CD4-positive, alpha-beta T cell (primary cell): ENCODE measurements at regions of chr1 and their contacts with region 1.

Region 1: GRCh38 chr1:161045750-161046571 is at the start of gene USF1:
- DNase-seq: peak; percentile 86 to 97 (median 92)
- ATAC-seq: peak; percentile 82
- H3K4me3 ChIP-seq: peak within 1 kb of the TSS; percentile 98
- H3K4me3 Mint-ChIP-seq: peak within 1 kb of the TSS; percentile 93
- H3K27ac ChIP-seq: peak within 1 kb of the TSS; percentile 90 to 96
- H3K27ac Mint-ChIP-seq: peak within 1 kb of the TSS; percentile 94
- H3K4me1 ChIP-seq: peaks cover 52% of the 10 kb centered on the region
- H3K4me1 Mint-ChIP-seq: peaks cover 43% of the 10 kb centered on the region
- H3K27me3 ChIP-seq: no peaks in the 10 kb centered on the region
- H3K27me3 Mint-ChIP-seq: no peaks in the 10 kb centered on the region
- CTCF ChIP-seq: no peak
- total RNA-seq, gene USF1: 93.5 to 99.1 TPM

Region 2: DNA sequence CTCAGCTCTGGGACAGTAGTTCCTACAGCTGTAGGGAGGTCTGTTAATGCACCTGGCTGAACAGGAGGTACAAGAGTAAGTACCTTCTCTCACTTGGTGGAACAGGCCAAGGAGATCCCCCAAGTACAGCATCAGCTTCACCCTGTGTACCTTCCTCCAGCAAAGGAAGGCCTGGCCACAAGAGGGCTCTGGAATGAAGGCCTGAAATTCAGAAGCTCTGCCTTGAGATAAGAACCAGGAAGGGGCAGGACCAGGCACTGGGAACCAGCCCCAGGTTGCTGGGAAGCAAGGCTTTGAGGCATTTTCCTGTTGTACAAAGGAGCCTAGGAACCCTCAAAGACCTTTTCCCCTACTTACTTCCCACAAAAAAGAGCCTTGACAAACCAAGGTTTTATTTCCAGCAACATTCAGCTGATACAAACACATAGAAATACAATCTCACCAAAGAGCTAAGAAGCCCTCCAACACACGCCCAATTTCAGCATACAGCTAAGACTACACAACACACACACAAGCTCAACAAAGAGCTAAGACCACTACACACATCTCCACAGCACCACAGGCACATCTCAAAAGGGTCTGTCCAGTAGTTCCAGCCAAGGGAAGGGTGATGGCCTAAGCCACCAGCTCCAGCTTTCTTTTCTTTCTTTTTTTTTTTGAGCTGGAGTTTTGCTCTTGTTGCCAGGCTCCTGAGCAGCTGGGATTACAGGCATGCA is 48.5 kb before region 1 on chr1:
- CTCF ChIA-PET with region 1: interaction called, 11 read pairs
- POLR2A ChIA-PET with region 1: interaction called, 13 read pairs
- intact Hi-C with region 1: no loop called
- DNase-seq: peak in 13 of 14 experiments; percentile 23 to 75 (median 47)
- ATAC-seq: peak; percentile 78
- H3K4me3 ChIP-seq: no peak overlapping the region
- H3K4me3 Mint-ChIP-seq: no peak overlapping the region
- H3K27ac ChIP-seq: no peak overlapping the region
- H3K27ac Mint-ChIP-seq: no peak overlapping the region
- H3K4me1 ChIP-seq: peaks cover 5% of the 10 kb centered on the region
- H3K4me1 Mint-ChIP-seq: no peaks in the 10 kb centered on the region
- H3K27me3 ChIP-seq: no peaks in the 10 kb centered on the region
- H3K27me3 Mint-ChIP-seq: no peaks in the 10 kb centered on the region
- CTCF ChIP-seq: peak; percentile 56

Region 3: GRCh38 chr1:161021165-161021960 is 24.6 kb before region 1 on chr1:
- CTCF ChIA-PET with region 1: interaction called, 10 read pairs
- POLR2A ChIA-PET with region 1: interaction called, 43 read pairs
- intact Hi-C with region 1: loop called in 1 of 2 experiments (anchors 1 kb)
- DNase-seq: peak; percentile 79 to 96 (median 90)
- ATAC-seq: peak; percentile 95
- H3K4me3 ChIP-seq: peak overlapping the region; percentile 77
- H3K4me3 Mint-ChIP-seq: peak overlapping the region; percentile 91
- H3K27ac ChIP-seq: no peak overlapping the region
- H3K27ac Mint-ChIP-seq: peak overlapping the region; percentile 81
- H3K4me1 ChIP-seq: peaks cover 19% of the 10 kb centered on the region
- H3K4me1 Mint-ChIP-seq: peaks cover 25% of the 10 kb centered on the region
- H3K27me3 ChIP-seq: no peaks in the 10 kb centered on the region
- H3K27me3 Mint-ChIP-seq: no peaks in the 10 kb centered on the region
- CTCF ChIP-seq: no peak

Region 4: DNA sequence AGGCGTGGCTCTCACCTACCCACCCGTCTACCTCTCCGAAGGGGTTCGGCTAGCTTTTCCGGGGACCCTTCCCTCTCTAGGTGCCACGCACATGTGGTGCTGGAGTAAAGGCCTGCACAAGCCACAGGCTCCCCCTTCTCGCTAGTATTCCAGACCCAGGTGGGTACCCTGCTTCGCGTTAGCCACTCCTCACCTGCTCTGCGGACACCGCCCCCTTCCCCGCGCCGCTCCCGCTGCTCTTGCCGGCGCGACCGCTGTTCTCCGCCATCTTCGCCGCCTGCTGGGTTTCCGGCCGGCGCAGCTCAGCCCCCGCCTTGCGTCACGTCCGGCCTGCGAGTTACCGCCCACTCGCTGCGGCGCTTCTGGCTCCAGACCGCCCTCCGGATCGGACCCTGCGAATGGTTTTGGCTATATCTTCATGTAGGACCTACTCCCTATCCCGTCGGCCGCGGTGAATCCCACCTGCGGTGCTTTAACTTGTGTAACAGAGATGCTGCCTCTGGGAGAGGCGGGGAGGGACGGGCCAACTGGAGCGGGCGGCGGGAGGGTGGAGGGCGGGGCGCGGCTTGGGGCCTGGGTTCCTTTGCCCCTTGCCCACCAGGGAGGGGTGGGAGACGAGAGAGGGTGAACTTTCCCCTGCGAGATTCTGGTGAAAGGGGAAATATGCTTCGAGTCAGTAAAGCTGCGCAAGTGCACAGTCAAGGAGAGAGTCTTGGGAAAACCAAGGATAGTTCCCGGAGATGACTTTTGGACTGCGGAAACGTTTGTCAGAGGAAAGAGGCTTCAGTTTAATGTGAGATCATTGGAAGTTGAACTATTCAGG is 72.0 kb after region 1 on chr1 and contains the starts of genes NIT1 and PFDN2:
- CTCF ChIA-PET with region 1: interaction called, 3 read pairs
- POLR2A ChIA-PET with region 1: interaction called, 4 read pairs
- intact Hi-C with region 1: loop called in 1 of 2 experiments (anchors 5 kb)
- DNase-seq: peak; percentile 65 to 93 (median 78)
- ATAC-seq: peak; percentile 71
- H3K4me3 ChIP-seq: peak within 1 kb of the TSS; percentile 91
- H3K4me3 Mint-ChIP-seq: peak within 1 kb of the TSS; percentile 97
- H3K27ac ChIP-seq: peak within 1 kb of the TSS; percentile 81 to 91
- H3K27ac Mint-ChIP-seq: peak within 1 kb of the TSS; percentile 91
- H3K4me1 ChIP-seq: peaks cover 53% of the 10 kb centered on the region
- H3K4me1 Mint-ChIP-seq: peaks cover 67% of the 10 kb centered on the region
- H3K27me3 ChIP-seq: no peaks in the 10 kb centered on the region
- H3K27me3 Mint-ChIP-seq: no peaks in the 10 kb centered on the region
- CTCF ChIP-seq: no peak
- total RNA-seq, gene NIT1: 15.9 to 18.0 TPM
- total RNA-seq, gene PFDN2: 46.2 to 57.7 TPM

Region 5: GRCh38 chr1:161153679-161154426 is 107.9 kb after region 1 on chr1 and contains the start of gene UFC1:
- CTCF ChIA-PET with region 1: interaction called, 3 read pairs
- POLR2A ChIA-PET with region 1: interaction called, 12 read pairs
- intact Hi-C with region 1: loop called (anchors 5 kb)
- DNase-seq: peak; percentile 67 to 96 (median 76)
- ATAC-seq: peak; percentile 91
- H3K4me3 ChIP-seq: peak within 1 kb of the TSS; percentile 97
- H3K4me3 Mint-ChIP-seq: peak within 1 kb of the TSS; percentile 98
- H3K27ac ChIP-seq: peak within 1 kb of the TSS; percentile 96 to 99
- H3K27ac Mint-ChIP-seq: peak within 1 kb of the TSS; percentile 99
- H3K4me1 ChIP-seq: peaks cover 19% of the 10 kb centered on the region
- H3K4me1 Mint-ChIP-seq: peaks cover 42% of the 10 kb centered on the region
- H3K27me3 ChIP-seq: no peaks in the 10 kb centered on the region
- H3K27me3 Mint-ChIP-seq: no peaks in the 10 kb centered on the region
- CTCF ChIP-seq: no peak
- total RNA-seq, gene UFC1: 96.6 to 97.8 TPM

Region 6: GRCh38 chr1:161165742-161166668 is 120.0 kb after region 1 on chr1 and contains the start of gene PPOX:
- CTCF ChIA-PET with region 1: interaction called, 6 read pairs
- POLR2A ChIA-PET with region 1: interaction called, 10 read pairs
- intact Hi-C with region 1: no loop called
- DNase-seq: peak; percentile 85 to 97 (median 88)
- ATAC-seq: peak; percentile 90
- H3K4me3 ChIP-seq: peak within 1 kb of the TSS; percentile 95
- H3K4me3 Mint-ChIP-seq: peak within 1 kb of the TSS; percentile 93
- H3K27ac ChIP-seq: peak within 1 kb of the TSS; percentile 85 to 86
- H3K27ac Mint-ChIP-seq: peak within 1 kb of the TSS; percentile 98
- H3K4me1 ChIP-seq: peaks cover 43% of the 10 kb centered on the region
- H3K4me1 Mint-ChIP-seq: peaks cover 66% of the 10 kb centered on the region
- H3K27me3 ChIP-seq: no peaks in the 10 kb centered on the region
- H3K27me3 Mint-ChIP-seq: no peaks in the 10 kb centered on the region
- CTCF ChIP-seq: peak; percentile 61
- total RNA-seq, gene PPOX: 28.6 to 31.5 TPM